ENCODE measurements at regions of chr6 and their contacts with region 1.

Region 1: DNA sequence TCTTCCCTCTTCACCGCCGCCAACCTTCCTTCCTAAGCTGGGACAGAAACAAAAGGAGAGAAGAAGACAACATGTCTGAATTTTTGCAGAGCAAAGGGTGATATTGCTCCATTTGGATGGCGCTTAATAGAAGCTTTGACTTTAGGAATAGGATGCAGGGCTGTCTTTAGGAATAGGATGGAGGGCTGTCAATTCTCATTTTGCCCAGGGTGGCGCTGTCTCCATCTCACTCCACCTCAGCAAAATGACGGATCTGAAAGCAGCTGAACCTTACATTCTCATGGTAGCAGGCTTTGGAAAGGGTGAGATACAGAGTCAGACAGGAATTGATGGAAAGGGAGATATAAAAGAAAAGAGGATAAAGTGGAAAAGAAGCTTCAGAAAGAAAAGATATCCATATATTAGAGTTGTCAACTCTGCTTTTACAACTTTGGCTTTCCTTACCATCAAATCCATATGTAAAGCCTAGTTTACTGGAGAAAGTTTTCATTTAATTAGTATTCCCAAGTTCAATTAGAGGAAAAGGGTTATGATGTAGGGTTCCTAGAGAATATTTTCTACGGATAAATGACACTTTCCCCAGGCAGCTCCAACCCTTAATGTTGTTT is 2.4 kb downstream of the MTCL3 start:
- DNase-seq: peak; percentile 66
- H3K4me3 Mint-ChIP-seq: peak overlapping the region; percentile 85
- H3K27ac Mint-ChIP-seq: peak overlapping the region; percentile 68
- H3K4me1 Mint-ChIP-seq: peaks cover 30% of the 10 kb centered on the region
- H3K27me3 Mint-ChIP-seq: peaks cover 33% of the 10 kb centered on the region

Region 2: DNA sequence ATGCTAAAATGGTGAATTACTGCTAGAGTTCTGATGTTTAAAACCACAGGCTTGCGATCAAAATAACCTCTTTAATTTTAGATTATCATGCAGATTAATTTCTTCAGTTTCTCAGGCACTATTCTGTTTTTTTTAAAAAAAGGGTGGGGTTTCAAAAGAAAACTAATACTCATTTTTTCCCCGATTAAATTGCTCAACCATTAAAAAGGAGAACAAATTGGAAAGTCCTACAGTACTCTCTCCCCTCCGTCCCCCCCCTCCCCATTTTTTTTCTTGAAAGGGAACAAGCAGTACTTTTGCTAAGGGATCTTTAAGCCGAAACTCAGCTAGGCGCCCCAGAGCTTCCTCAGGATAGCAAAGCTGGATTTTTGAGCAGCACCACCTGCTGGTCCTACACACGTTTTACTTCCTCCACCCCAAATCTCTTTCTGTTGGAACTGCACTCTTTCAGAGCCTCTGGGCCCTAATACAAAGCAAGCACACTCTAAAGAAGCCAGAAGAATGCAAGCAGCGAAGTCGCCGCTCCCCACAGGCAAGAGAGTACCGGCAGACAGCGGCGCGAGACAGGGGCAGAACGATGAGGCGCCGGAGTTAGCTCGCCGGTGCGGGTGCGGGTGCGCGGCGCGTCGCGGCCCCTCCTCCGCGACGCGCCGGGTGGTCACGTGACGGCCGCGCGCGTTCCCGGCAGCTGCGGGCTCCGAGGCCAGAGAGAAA is 250.4 kb before region 1 on chr6 and contains the start of gene RNF146:
- CTCF ChIA-PET with region 1: interaction called, 5 read pairs
- intact Hi-C with region 1: loop called (anchors 1 kb)
- DNase-seq: peak; percentile 74
- H3K4me3 Mint-ChIP-seq: peak within 1 kb of the TSS; percentile 100
- H3K27ac Mint-ChIP-seq: peak within 1 kb of the TSS; percentile 100
- H3K4me1 Mint-ChIP-seq: peaks cover 25% of the 10 kb centered on the region
- H3K27me3 Mint-ChIP-seq: no peaks in the 10 kb centered on the region
- total RNA-seq, gene RNF146: 9.7 to 10.8 TPM

Region 3: GRCh38 chr6:127342946-127343808 is 173.6 kb before region 1 on chr6 and contains the start of gene ECHDC1:
- CTCF ChIA-PET with region 1: interaction called, 9 read pairs
- intact Hi-C with region 1: loop called (anchors 1 kb)
- DNase-seq: peak; percentile 81
- H3K4me3 Mint-ChIP-seq: no peak within 1 kb of the TSS
- H3K27ac Mint-ChIP-seq: no peak within 1 kb of the TSS
- H3K4me1 Mint-ChIP-seq: peaks cover 13% of the 10 kb centered on the region
- H3K27me3 Mint-ChIP-seq: no peaks in the 10 kb centered on the region
- total RNA-seq, gene ECHDC1: 40.1 to 41.4 TPM

Region 4: GRCh38 chr6:127477648-127478047 is 39.1 kb before region 1 on chr6:
- CTCF ChIA-PET with region 1: interaction called, 11 read pairs
- intact Hi-C with region 1: no loop called
- DNase-seq: no peak
- H3K4me3 Mint-ChIP-seq: no peak overlapping the region
- H3K27ac Mint-ChIP-seq: no peak overlapping the region
- H3K4me1 Mint-ChIP-seq: peaks cover 2% of the 10 kb centered on the region
- H3K27me3 Mint-ChIP-seq: peaks cover 4% of the 10 kb centered on the region

Region 5: GRCh38 chr6:127570739-127571389 is 54.1 kb after region 1 on chr6:
- CTCF ChIA-PET with region 1: interaction called, 10 read pairs
- intact Hi-C with region 1: loop called (anchors 1 kb)
- DNase-seq: no peak
- H3K4me3 Mint-ChIP-seq: no peak overlapping the region
- H3K27ac Mint-ChIP-seq: no peak overlapping the region
- H3K4me1 Mint-ChIP-seq: peaks cover 19% of the 10 kb centered on the region
- H3K27me3 Mint-ChIP-seq: no peaks in the 10 kb centered on the region

Region 6: GRCh38 chr6:127582777-127583462 is 66.2 kb after region 1 on chr6:
- CTCF ChIA-PET with region 1: no interaction called
- intact Hi-C with region 1: no loop called
- DNase-seq: no peak
- H3K4me3 Mint-ChIP-seq: no peak overlapping the region
- H3K27ac Mint-ChIP-seq: no peak overlapping the region
- H3K4me1 Mint-ChIP-seq: peaks cover 1% of the 10 kb centered on the region
- H3K27me3 Mint-ChIP-seq: peaks cover 4% of the 10 kb centered on the region

Measured in activated naive CD4-positive, alpha-beta T cell treated with anti-CD3 and anti-CD28 coated beads for 36 hours (primary cell).